ENCODE measurements at regions of chr17 and their contacts with region 1.

Region 1: GRCh38 chr17:45385331-45385997 is 47.2 kb downstream of the ARHGAP27 start:
- DNase-seq: peak; percentile 91
- ATAC-seq: peak; percentile 95

Region 2: GRCh38 chr17:45218895-45219661 is 166.4 kb before region 1 on chr17:
- intact Hi-C with region 1: loop called (anchors 2 kb)
- DNase-seq: peak; percentile 93
- ATAC-seq: peak; percentile 82

Region 3: DNA sequence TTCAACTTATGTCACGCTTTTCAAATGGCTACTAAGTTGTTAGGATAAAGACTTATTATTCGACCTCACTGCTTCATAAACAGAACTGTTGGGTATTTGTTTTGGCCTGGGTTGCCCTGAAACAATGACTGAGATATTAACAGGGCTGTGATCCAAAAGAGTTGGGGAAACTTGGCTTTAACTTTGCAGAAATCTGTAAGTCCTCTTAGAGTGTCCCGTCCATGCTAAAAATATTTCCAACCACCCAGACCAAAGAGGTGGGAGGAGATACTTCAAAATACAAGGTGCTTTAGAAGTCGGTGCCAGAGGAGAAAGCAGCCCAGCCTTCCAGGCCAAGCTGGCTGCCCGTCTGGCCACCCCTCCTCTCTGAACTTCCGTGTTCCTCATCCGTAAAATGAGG is 107.5 kb before region 1 on chr17:
- intact Hi-C with region 1: loop called (anchors 2 kb)
- DNase-seq: peak; percentile 54
- ATAC-seq: peak; percentile 68